ENCODE measurements at regions of chr18 and their contacts with region 1.

Region 1: DNA sequence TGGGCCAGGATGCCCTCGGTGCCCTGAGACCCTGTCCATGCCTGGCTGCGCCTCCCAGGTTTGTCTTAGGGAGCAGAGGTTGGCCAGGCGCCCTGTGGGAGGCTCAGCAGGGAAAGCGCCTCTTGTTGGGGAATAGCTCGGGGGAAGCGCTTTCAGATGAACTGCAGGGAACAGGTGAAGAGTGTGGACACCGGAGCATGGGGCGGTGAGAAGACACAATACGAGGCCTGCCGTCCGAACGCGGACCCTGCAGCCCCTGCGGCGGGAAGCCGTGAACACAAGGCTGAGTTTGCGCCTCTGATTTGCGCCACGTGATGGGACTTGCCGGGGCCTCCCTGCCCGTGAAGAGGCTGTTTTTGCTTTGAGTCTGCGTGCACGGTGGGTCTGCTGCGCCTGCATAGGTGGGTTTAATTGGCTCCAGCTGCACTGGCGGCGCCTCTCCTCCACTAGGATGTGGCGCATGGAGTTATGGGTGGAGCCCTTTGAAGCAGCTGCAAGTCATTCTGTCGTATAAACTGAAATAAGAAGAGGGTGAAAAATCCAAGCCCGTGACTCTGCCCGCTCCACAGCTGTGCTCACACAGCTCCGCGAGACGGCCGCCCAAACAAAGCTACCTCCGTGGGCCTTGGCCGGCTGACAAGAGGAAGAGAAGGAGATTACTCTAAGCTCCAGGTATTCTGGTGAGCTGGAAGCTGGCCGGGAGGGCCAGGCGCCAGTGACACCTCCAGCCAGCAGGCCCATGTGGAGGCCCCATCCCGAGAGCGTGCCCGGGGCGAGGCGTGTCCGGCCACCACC is 103.5 kb upstream of the CTDP1 start:
- DNase-seq: peak; percentile 13
- H3K4me3 ChIP-seq: no peak overlapping the region
- H3K27ac ChIP-seq: peak overlapping the region; percentile 34 to 65 (median 56)
- H3K4me1 ChIP-seq: peaks cover 12 to 28% (median 16%) of the 10 kb centered on the region in 4 donors
- H3K27me3 ChIP-seq: no peaks in the 10 kb centered on the region
- CTCF ChIP-seq: no peak
- EP300 ChIP-seq: no peak
- POLR2A ChIP-seq: no peak

Region 2: GRCh38 chr18:79528846-79529245 is 47.2 kb before region 1 on chr18:
- in situ Hi-C with region 1: no loop called
- intact Hi-C with region 1: loop called (anchors 1 kb)
- DNase-seq: peak; percentile 64
- H3K4me3 ChIP-seq: no peak overlapping the region
- H3K27ac ChIP-seq: no peak overlapping the region
- H3K4me1 ChIP-seq: peaks cover 0 to 10% (median 3%) of the 10 kb centered on the region in 4 donors
- H3K27me3 ChIP-seq: peaks cover 9% of the 10 kb centered on the region
- CTCF ChIP-seq: peak; percentile 83 to 91 (median 88)
- EP300 ChIP-seq: no peak
- POLR2A ChIP-seq: no peak

Region 3: GRCh38 chr18:79698668-79699335 is 122.7 kb after region 1 on chr18:
- in situ Hi-C with region 1: no loop called
- intact Hi-C with region 1: no loop called
- DNase-seq: no peak
- H3K4me3 ChIP-seq: no peak overlapping the region
- H3K27ac ChIP-seq: peak overlapping the region; percentile 1 to 63 (median 46)
- H3K4me1 ChIP-seq: peaks cover 0 to 14% (median 9%) of the 10 kb centered on the region in 4 donors
- H3K27me3 ChIP-seq: no peaks in the 10 kb centered on the region
- CTCF ChIP-seq: no peak
- EP300 ChIP-seq: no peak
- POLR2A ChIP-seq: no peak

Region 4: GRCh38 chr18:79877214-79878091 is 301.4 kb after region 1 on chr18:
- in situ Hi-C with region 1: no loop called
- intact Hi-C with region 1: no loop called
- DNase-seq: no peak
- H3K4me3 ChIP-seq: no peak overlapping the region
- H3K27ac ChIP-seq: no peak overlapping the region
- H3K4me1 ChIP-seq: no peaks in the 10 kb centered on the region
- H3K27me3 ChIP-seq: peaks cover 14% of the 10 kb centered on the region
- CTCF ChIP-seq: no peak
- EP300 ChIP-seq: no peak
- POLR2A ChIP-seq: no peak

Measured in transverse colon (tissue), 4 donors.